Activated naive CD4-positive, alpha-beta T cell treated with anti-CD3 and anti-CD28 coated beads for 36 hours (primary cell): ENCODE measurements at regions of chr1 and their contacts with region 1.

Region 1: DNA sequence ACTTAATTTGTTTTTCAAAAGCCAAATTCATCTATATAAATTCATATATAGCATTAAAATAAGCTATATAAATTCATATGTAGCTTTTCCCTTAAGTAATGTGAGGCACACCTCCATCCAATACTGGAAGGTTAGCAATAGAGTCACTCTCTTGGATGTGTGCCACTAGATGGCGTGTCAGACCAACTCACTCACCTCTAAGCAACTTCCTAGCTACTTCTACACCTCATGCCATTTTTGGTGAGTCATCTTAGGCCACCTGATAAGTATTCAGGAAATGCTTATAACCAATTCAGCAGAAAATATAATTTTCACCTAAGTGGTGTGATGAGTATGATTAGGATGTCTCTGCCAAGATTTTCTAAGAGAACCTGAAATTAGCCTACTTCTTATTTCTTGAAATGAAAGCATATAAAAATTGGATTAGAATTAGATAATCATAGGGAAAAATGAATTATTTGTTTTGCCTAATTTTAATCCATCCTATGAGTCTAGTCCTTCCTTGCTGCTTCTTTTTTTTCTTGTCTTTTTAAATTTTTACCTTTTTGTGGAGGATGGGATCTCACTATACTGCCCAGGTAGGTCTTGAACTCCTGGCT is 34.4 kb upstream of the TADA1 start:
- DNase-seq: peak; percentile 90
- H3K4me3 Mint-ChIP-seq: no peak overlapping the region
- H3K27ac Mint-ChIP-seq: no peak overlapping the region
- H3K4me1 Mint-ChIP-seq: peaks cover 5% of the 10 kb centered on the region
- H3K27me3 Mint-ChIP-seq: no peaks in the 10 kb centered on the region

Region 2: DNA sequence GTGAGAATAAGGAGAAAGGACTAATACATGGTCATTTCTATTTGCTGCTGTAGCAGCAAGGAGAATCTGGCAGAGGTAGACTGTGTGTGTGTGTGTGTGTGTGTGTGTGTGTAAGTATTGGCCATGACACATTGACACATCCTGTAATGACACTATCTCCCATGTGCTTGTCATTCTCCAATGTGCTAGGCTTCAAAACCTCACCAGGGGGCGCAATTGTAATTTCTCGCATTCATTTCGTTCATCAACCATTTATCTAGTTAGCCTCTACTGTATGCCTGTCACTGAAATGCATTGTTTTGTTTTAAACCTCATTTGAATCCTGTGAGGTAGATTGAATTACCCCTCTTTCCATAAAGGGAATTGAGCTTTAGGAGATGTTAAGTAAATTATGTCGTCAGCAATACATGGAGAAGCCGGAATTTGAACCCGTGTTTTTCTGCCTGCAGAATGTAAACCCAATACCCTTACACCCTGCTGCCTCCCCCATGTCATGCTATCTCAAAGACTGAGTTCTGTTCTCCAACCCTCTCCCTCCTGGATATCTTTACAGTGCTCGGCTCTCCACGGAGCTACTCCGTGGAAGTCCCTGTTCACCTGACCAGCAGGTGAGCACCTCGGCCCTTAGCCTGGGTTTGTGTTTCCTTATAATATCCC is 982.3 kb before region 1 on chr1:
- CTCF ChIA-PET with region 1: no interaction called
- intact Hi-C with region 1: loop called (anchors 5 kb)
- DNase-seq: peak; percentile 75
- H3K4me3 Mint-ChIP-seq: no peak overlapping the region
- H3K27ac Mint-ChIP-seq: no peak overlapping the region
- H3K4me1 Mint-ChIP-seq: peaks cover 2% of the 10 kb centered on the region
- H3K27me3 Mint-ChIP-seq: peaks cover 23% of the 10 kb centered on the region

Region 3: DNA sequence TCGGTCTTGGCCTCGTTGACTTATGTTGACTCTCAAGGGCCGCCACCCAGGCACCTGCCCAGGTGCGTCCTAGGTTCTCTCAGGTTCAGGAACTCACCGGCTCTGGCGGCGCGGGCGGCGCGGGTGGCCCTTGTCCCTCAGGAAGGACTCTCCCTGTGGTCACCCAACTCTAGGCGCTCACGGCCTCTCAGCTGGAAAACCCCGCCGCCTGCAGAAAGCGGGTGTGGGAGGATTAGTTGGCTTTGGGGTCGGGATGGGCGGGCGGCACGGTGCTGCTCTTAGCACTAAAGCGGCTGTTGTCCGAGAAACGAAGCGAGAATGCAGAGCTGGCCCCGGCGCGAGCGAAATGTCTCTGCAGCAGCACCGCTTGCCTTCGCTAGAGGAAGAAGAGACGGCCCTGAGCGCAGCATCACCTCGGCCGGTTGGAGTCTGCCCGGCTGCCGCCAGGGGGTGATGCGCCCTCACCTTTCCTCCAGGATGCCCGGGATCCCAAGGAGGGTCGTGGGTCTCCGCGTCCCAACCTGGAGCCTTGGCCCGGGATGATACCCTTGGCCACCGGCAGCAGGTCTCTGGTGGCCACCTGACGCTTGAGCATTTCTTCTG is 26.4 kb before region 1 on chr1:
- CTCF ChIA-PET with region 1: interaction called, 36 read pairs
- intact Hi-C with region 1: loop called (anchors 1 kb)
- DNase-seq: peak; percentile 58
- H3K4me3 Mint-ChIP-seq: no peak overlapping the region
- H3K27ac Mint-ChIP-seq: no peak overlapping the region
- H3K4me1 Mint-ChIP-seq: peaks cover 3% of the 10 kb centered on the region
- H3K27me3 Mint-ChIP-seq: peaks cover 21% of the 10 kb centered on the region

Region 4: GRCh38 chr1:167043752-167044488 is 133.4 kb after region 1 on chr1:
- CTCF ChIA-PET with region 1: interaction called, 15 read pairs
- intact Hi-C with region 1: loop called (anchors 1 kb)
- DNase-seq: peak; percentile 88
- H3K4me3 Mint-ChIP-seq: peak overlapping the region; percentile 75
- H3K27ac Mint-ChIP-seq: peak overlapping the region; percentile 67
- H3K4me1 Mint-ChIP-seq: peaks cover 16% of the 10 kb centered on the region
- H3K27me3 Mint-ChIP-seq: peaks cover 3% of the 10 kb centered on the region

Region 5: GRCh38 chr1:167121375-167122120 is 211.1 kb after region 1 on chr1:
- CTCF ChIA-PET with region 1: interaction called, 4 read pairs
- intact Hi-C with region 1: loop called (anchors 1 kb)
- DNase-seq: peak; percentile 58
- H3K4me3 Mint-ChIP-seq: peak overlapping the region; percentile 81
- H3K27ac Mint-ChIP-seq: no peak overlapping the region
- H3K4me1 Mint-ChIP-seq: peaks cover 3% of the 10 kb centered on the region
- H3K27me3 Mint-ChIP-seq: peaks cover 2% of the 10 kb centered on the region